Activated naive CD4-positive, alpha-beta T cell treated with anti-CD3 and anti-CD28 coated beads for 36 hours (primary cell): ENCODE measurements at regions of chr1 and their contacts with region 1.

Region 1: DNA sequence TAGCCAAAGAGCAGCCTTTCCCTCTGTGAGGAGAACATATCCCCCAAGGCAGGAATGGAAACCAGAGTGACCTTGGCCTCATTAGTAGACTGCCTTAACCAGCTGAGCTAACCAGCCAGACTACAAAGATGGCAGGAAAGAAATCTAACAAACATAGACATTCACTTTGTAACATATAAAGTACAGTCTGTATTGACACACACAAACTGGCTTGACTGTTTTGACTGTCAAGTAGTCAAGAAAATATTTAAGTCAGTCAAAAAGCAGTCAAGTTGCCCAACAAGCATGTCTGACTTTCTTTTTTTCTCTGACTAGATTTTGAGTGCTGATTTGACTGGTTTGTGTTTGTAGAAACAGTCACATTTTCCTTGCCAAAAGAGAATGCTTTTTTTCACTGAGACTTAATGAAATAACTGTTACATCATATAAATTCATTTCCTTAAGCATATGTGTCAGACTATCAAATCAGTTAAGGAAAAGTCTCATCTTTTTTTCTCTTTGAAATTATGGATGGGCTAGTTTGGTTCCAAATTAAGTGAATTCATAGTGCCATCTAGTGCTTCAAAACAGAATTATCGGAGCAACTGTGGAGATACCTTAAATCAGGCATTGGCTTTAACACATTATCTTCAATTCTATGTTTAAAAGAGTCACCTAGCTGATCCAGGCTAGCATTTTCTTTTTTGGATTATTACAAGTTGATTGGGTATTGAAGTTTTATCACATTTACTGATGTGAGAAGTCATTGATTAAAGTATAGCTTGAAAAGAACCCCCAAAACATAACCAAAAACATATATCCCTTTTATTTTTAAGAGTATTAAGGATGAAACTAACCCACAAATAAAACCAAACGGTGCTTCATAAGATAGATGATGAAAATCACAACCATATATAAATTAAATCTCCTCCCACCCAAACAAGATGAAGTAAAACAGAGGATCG is 75.0 kb downstream of the ATP6V1G3 start:
- DNase-seq: no peak
- H3K4me3 Mint-ChIP-seq: no peak overlapping the region
- H3K27ac Mint-ChIP-seq: no peak overlapping the region
- H3K4me1 Mint-ChIP-seq: peaks cover 13% of the 10 kb centered on the region
- H3K27me3 Mint-ChIP-seq: no peaks in the 10 kb centered on the region

Region 2: DNA sequence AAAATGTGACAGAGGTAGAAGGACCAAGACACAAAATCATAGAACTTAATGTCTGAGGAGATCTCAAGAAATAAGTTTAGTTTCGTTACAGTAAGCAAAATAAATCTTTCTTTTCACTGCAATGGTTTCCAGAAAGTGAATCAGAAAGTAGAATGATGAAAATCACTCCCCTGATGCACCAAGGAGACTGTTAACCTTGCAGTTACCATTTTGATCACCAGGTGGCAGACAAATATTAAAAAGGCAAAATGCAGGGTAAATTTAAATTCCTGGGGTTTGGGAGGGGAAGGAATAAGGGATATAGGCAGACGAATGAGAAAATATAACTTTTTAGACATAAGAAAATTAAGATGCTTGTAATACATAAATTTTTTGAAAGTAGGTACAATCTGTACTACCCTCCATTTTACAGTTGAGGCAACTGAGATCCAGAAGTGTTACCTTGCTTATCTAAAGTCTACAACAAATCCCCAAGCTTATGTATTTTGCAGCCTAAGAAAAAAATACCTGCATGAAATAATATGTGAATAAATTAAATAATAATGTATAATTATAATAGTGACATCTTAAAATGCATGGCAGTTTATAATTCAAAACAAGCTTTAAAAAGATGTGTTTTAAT is 944.2 kb before region 1 on chr1:
- CTCF ChIA-PET with region 1: no interaction called
- intact Hi-C with region 1: loop called (anchors 1 kb)
- DNase-seq: peak; percentile 37
- H3K4me3 Mint-ChIP-seq: no peak overlapping the region
- H3K27ac Mint-ChIP-seq: no peak overlapping the region
- H3K4me1 Mint-ChIP-seq: no peaks in the 10 kb centered on the region
- H3K27me3 Mint-ChIP-seq: no peaks in the 10 kb centered on the region

Region 3: GRCh38 chr1:197868751-197869489 is 596.6 kb before region 1 on chr1:
- CTCF ChIA-PET with region 1: no interaction called
- intact Hi-C with region 1: loop called (anchors 2 kb)
- DNase-seq: peak; percentile 56
- H3K4me3 Mint-ChIP-seq: no peak overlapping the region
- H3K27ac Mint-ChIP-seq: no peak overlapping the region
- H3K4me1 Mint-ChIP-seq: no peaks in the 10 kb centered on the region
- H3K27me3 Mint-ChIP-seq: no peaks in the 10 kb centered on the region

Region 4: GRCh38 chr1:198088360-198089071 is 377.0 kb before region 1 on chr1:
- CTCF ChIA-PET with region 1: interaction called, 7 read pairs
- intact Hi-C with region 1: loop called (anchors 1 kb)
- DNase-seq: peak; percentile 26
- H3K4me3 Mint-ChIP-seq: no peak overlapping the region
- H3K27ac Mint-ChIP-seq: no peak overlapping the region
- H3K4me1 Mint-ChIP-seq: peaks cover 7% of the 10 kb centered on the region
- H3K27me3 Mint-ChIP-seq: no peaks in the 10 kb centered on the region

Region 5: DNA sequence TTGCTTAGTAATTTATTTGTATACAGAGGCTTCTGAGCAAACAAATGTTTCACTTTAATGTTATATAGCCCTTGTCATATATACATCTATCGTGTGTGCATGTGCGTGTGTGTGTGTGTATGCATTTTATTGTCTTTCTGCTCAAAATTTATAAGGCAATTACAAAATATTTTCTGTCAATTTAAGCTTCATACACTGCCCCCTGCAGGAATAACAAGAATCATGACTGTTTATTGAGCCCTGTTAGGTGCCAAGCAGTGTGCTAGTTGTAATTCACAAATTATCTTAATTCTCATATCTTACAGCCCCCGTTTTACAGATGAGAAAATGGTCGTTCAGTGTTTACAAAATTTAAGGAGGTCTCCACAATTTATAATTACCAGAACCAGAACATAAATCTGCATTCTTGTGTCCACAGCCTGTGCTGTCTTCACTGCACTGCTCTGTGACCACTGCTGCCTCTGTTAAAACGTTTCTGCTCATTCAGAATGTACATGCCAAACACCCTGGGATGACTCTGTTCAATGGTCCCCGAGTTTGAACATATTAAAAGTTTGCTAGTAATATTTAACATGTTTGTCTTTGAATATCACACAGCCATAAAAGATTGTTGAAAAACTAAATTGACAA is 106.3 kb before region 1 on chr1:
- CTCF ChIA-PET with region 1: no interaction called
- intact Hi-C with region 1: loop called (anchors 2 kb)
- DNase-seq: no peak
- H3K4me3 Mint-ChIP-seq: no peak overlapping the region
- H3K27ac Mint-ChIP-seq: no peak overlapping the region
- H3K4me1 Mint-ChIP-seq: no peaks in the 10 kb centered on the region
- H3K27me3 Mint-ChIP-seq: no peaks in the 10 kb centered on the region

Region 6: DNA sequence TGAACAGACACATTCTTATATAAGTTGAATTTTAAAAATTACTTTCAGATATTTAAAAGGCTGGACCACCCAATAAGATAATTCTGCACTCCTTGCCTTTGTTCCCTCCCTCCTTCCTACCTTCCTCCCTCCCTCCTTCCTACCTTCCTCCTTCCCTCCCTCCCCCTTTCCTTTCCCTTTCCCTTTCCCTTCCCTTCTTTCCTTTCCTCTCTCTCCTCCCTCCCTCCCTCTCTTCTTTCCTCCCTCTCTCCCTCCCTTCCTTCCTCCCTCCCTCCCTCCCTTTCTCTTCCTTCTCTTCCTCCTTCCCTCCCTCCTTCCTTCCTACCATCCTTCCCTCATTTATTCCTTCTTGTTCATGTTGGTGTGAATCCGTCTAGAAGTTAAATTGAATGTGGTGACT is 18.0 kb before region 1 on chr1:
- CTCF ChIA-PET with region 1: no interaction called
- intact Hi-C with region 1: no loop called
- DNase-seq: no peak
- H3K4me3 Mint-ChIP-seq: no peak overlapping the region
- H3K27ac Mint-ChIP-seq: no peak overlapping the region
- H3K4me1 Mint-ChIP-seq: no peaks in the 10 kb centered on the region
- H3K27me3 Mint-ChIP-seq: no peaks in the 10 kb centered on the region

Region 7: DNA sequence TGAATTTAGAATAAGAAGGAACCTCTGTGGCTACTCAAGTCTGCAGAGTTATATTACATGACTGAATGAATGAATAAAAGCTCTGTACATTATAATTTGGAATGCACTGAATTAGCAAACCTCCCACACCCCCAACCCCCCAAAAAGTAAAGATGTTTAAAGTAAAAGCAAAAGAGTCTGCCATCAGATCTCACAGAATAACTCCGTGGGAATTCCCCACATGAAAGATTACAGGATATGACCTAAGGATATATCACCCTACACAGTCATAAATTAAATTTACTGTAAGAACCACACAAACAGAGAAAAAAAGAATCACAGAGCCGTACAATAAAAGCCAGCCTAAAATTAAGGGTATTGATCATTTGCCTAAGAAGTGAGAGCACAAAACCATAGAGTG is 760.7 kb after region 1 on chr1:
- CTCF ChIA-PET with region 1: no interaction called
- intact Hi-C with region 1: loop called (anchors 1 kb)
- DNase-seq: peak; percentile 66
- H3K4me3 Mint-ChIP-seq: peak overlapping the region; percentile 46
- H3K27ac Mint-ChIP-seq: peak overlapping the region; percentile 27
- H3K4me1 Mint-ChIP-seq: peaks cover 23% of the 10 kb centered on the region
- H3K27me3 Mint-ChIP-seq: no peaks in the 10 kb centered on the region